ENCODE measurements at regions of chr2 and their contacts with region 1.

Region 1: DNA sequence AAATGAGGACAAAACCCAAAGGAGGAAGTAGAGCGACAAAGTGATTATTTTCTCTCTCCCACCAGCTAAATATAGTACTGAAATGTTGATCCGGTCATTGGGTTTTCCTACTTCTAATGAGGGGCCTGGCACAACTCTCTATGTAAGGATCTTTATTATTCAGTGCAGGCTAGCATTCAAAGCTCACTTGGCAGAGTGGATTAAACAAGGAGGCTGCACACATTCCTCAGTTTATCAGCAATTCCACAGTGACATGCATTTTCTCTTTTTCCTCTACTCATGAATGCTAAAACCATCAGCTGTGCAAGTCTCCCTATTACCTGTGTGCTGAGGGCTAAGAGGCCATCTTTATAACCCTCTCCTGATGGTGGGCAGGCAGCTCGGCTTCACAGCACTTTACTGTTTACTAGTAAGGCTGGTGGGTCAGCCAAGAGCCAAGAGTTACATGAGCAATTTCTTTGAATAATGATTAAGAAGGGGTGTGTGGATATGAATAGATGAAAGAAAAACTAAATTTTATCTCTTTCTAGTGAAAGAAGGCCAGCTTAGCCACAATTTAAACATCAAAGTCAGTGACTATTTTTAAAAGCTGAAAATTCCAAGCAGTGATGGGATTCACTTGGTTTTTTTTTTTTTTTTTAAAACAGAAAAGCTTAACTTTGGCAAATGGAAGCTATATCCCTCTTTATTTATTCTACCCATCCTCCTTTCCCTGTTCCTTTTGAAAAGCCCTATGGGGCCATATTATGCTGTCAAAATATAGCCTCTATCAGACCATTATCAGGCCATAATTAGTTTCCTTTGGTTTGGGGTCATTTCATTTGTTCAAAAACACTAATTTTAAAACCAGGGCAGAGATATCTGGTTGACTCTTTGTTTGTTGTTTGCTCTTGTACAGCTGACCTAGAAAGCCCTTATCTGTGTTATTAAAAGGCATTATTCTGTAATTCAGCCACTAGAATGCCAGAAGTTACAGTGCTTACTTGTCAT is 111.0 kb downstream of the RBM43 start:
- DNase-seq: no peak
- H3K4me3 ChIP-seq: no peak overlapping the region
- H3K27ac ChIP-seq: no peak overlapping the region
- H3K4me1 ChIP-seq: no peaks in the 10 kb centered on the region
- H3K27me3 ChIP-seq: peaks cover 0 to 5% of the 10 kb centered on the region in 2 experiments
- CTCF ChIP-seq: no peak
- POLR2A ChIP-seq: no peak

Region 2: DNA sequence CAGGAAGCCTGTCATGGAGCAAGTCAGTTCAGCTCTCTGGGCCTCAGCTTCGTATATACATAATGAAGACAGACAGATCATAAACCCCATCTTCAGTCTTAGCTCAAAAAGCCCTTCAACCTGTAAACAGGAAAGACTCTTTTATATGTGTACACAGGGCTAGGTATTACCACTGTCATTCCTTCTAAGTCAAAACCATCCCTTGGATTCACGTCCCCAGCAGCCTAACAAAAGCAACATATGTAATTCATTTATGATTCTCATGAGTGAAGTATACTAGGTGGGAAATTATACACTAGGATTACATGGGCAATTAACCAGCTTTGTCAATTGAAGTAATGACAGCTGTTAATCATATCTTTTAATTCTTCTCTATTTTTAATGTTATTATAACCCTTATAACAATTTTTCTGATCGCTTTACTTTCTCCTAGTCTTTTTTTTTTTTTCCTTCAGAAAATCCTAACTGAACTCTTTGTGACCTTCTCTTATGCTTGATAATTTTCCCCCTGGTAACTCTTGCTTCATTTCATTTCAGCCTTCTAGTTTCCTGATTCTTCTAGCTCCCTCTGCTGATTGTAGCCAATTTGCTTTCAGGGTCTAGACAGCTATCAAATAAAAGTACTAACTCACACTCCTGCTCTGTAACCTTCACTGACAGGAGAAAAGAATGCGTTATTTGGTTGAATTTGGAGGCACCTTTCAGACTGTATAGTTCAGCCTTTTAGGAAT is 11.4 kb after region 1 on chr2:
- CTCF ChIA-PET with region 1: interaction called, 12 read pairs
- POLR2A ChIA-PET with region 1: no interaction called
- dilution Hi-C with region 1: no loop called
- intact Hi-C with region 1: no loop called
- DNase-seq: peak; percentile 28
- H3K4me3 ChIP-seq: no peak overlapping the region
- H3K27ac ChIP-seq: no peak overlapping the region
- H3K4me1 ChIP-seq: no peaks in the 10 kb centered on the region
- H3K27me3 ChIP-seq: peaks cover 11 to 14% of the 10 kb centered on the region in 2 experiments
- CTCF ChIP-seq: no peak
- POLR2A ChIP-seq: no peak